Endothelial cell of umbilical vein (primary cell): ENCODE measurements at regions of chr5 and their contacts with region 1.

Region 1: DNA sequence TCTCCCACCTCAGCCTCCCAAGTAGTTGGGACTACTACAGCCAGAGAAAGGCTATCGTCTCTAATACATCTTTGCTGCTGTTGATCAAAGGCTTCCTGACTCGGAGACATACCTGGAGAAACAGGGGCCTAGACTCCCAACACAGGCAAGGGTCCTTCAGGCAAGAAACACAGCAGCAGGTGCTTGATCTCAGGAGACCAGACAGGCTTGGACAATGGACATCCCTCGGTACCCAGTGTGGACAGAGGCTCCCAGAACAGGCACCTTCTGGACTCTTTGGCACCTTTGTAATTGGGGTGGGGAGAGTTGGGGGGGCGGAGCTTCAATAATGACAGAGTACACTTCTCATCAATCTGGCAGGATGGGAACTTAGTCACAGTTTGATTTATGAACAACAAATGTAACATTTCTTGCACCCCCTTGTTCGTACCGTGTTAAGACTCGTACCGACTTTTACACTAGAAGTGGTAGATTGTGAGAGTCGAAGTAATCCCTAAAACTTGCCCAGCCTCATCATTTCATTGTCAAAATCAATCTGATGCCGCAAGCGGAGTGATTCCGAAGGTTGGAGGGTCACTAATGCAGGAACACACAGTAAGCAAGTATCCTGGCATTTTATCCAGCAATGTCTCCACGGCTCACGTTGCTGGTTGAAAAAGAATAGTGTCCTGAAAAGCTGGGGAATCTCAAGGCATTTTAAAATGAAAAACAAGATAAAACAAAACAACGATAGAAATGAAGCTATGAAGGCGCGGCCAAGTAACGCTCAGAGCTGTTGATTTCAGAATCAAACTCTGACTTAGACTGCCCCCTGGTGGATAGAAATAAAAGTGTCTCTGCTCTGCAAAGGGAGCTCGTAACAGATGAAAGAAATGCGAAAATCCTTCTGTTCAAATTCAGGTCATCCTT is 46.4 kb upstream of the STK32A start:
- DNase-seq: peak; percentile 46
- H3K4me3 ChIP-seq: no peak overlapping the region
- H3K27ac ChIP-seq: no peak overlapping the region
- H3K4me1 ChIP-seq: no peaks in the 10 kb centered on the region
- H3K27me3 ChIP-seq: peaks cover 0 to 8% of the 10 kb centered on the region in 2 experiments
- CTCF ChIP-seq: peak; percentile 60 to 70
- POLR2A ChIP-seq: no peak

Region 2: DNA sequence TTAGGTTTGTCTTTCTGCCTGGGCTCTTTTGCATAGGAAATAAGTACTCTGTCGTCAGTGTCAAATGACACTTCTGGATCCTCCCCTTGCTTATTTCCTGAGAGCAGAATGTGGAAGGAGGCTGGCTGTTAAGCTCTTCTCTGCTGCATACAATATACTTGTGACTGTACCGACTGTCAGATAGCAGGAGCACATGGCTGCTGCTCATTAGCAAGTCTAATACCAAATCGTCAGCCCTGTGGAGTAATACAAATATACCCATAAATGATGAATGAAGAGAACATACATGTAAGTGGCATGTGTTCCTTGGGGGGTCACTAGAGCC is 672.3 kb before region 1 on chr5 and contains the start of gene GPR151:
- CTCF ChIA-PET with region 1: interaction called, 12 read pairs
- POLR2A ChIA-PET with region 1: no interaction called
- dilution Hi-C with region 1: no loop called
- intact Hi-C with region 1: no loop called
- DNase-seq: no peak
- H3K4me3 ChIP-seq: no peak within 1 kb of the TSS
- H3K27ac ChIP-seq: no peak within 1 kb of the TSS
- H3K4me1 ChIP-seq: no peaks in the 10 kb centered on the region
- H3K27me3 ChIP-seq: peaks cover 0 to 2% of the 10 kb centered on the region in 2 experiments
- CTCF ChIP-seq: no peak
- POLR2A ChIP-seq: no peak
- total RNA-seq, gene GPR151: not detected in 2 replicates

Region 3: DNA sequence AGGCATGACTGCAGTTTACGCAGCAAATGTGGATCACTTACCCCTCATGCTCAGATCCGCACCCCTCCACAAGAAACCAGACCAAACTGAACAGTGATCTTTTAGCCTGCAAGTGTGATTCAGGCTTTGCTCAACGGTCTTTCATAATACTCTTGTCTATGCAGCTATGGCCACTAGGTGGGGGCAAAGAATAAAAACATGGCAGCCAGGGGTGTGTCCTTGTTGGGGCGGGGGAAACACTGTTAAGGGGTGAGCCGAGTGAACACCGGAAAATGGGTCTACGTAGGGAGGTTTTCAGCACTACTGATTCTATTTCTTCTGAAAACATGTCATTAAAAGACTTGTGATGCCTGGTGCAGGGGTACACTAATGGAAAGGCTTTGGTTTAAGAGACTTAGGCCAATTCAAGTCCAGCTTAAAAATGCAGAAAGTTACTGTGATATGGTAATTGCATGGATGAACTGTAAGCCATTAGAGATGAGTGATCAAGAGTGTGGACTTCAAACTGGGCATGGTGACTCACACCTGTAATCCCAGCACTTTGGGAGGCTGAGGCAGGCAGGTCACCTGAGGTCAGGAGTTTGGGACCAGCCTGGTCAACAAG is 622.6 kb before region 1 on chr5:
- CTCF ChIA-PET with region 1: interaction called, 21 read pairs
- POLR2A ChIA-PET with region 1: no interaction called
- dilution Hi-C with region 1: no loop called
- intact Hi-C with region 1: no loop called
- DNase-seq: peak; percentile 42
- H3K4me3 ChIP-seq: no peak overlapping the region
- H3K27ac ChIP-seq: no peak overlapping the region
- H3K4me1 ChIP-seq: no peaks in the 10 kb centered on the region
- H3K27me3 ChIP-seq: peaks cover 0 to 3% of the 10 kb centered on the region in 2 experiments
- CTCF ChIP-seq: peak; percentile 45 to 51
- POLR2A ChIP-seq: no peak

Region 4: DNA sequence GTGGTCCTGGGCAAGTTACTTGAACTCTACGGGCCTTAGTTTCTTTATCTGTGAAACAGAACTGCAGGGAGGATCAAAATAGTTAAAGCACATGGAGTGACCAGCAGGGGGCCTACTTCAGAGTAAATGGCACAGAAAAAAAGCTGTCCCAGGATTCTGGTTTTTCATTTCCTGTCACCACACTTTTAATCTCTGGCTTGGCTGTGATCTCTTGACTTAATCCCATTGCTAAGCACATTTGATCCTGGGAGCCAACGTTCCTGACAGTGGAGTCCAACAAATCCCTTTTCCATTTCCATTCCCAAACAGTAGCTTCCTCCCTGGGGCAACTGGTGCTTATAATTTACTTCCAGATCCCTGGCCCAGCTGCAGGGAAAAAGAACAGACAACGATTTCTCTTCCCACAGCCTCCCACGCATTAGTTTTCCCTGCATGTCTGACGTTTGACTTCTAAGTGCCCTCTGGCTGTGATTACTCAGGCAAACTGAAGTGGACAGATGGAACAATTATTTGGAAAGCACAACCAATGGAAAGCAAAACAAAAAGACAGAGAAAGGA is 90.1 kb before region 1 on chr5:
- CTCF ChIA-PET with region 1: interaction called, 89 read pairs
- POLR2A ChIA-PET with region 1: no interaction called
- dilution Hi-C with region 1: no loop called
- intact Hi-C with region 1: loop called (anchors 1 kb)
- DNase-seq: peak; percentile 23
- H3K4me3 ChIP-seq: no peak overlapping the region
- H3K27ac ChIP-seq: no peak overlapping the region
- H3K4me1 ChIP-seq: no peaks in the 10 kb centered on the region
- H3K27me3 ChIP-seq: no peaks in the 10 kb centered on the region
- CTCF ChIP-seq: peak; percentile 51 to 54
- POLR2A ChIP-seq: no peak

Region 5: GRCh38 chr5:147177125-147177840 is 11.2 kb before region 1 on chr5:
- CTCF ChIA-PET with region 1: interaction called, 54 read pairs
- POLR2A ChIA-PET with region 1: no interaction called
- dilution Hi-C with region 1: no loop called
- intact Hi-C with region 1: no loop called
- DNase-seq: no peak
- H3K4me3 ChIP-seq: no peak overlapping the region
- H3K27ac ChIP-seq: no peak overlapping the region
- H3K4me1 ChIP-seq: no peaks in the 10 kb centered on the region
- H3K27me3 ChIP-seq: peaks cover 0 to 2% of the 10 kb centered on the region in 2 experiments
- CTCF ChIP-seq: no peak
- POLR2A ChIP-seq: no peak

Region 6: DNA sequence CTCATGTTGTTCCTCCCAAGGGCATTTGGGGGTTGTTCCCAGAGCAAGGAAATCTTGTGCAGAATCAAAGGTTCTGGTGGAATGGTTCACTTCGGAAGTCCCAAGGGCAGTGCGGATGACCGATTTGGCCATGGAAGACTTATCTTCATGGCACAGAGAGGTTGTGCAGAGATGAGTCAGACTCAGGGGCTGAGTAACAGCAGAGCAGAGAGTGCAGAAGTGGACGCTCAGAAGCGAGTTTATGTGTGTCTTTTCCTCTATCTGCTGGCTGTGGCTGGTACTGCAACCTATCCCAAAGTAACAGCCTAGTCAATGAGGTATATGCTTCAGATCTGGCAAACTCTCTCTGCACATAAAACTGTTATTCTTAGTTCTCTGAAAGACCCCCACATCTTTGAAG is 203.3 kb after region 1 on chr5:
- CTCF ChIA-PET with region 1: interaction called, 14 read pairs
- POLR2A ChIA-PET with region 1: no interaction called
- dilution Hi-C with region 1: no loop called
- intact Hi-C with region 1: no loop called
- DNase-seq: peak; percentile 80
- H3K4me3 ChIP-seq: no peak overlapping the region
- H3K27ac ChIP-seq: no peak overlapping the region
- H3K4me1 ChIP-seq: peaks cover 12% of the 10 kb centered on the region
- H3K27me3 ChIP-seq: no peaks in the 10 kb centered on the region
- CTCF ChIP-seq: peak; percentile 63 to 73
- POLR2A ChIP-seq: no peak